MCF 10A (cell line): ENCODE measurements at regions of chr2 and their contacts with region 1.

Region 1: DNA sequence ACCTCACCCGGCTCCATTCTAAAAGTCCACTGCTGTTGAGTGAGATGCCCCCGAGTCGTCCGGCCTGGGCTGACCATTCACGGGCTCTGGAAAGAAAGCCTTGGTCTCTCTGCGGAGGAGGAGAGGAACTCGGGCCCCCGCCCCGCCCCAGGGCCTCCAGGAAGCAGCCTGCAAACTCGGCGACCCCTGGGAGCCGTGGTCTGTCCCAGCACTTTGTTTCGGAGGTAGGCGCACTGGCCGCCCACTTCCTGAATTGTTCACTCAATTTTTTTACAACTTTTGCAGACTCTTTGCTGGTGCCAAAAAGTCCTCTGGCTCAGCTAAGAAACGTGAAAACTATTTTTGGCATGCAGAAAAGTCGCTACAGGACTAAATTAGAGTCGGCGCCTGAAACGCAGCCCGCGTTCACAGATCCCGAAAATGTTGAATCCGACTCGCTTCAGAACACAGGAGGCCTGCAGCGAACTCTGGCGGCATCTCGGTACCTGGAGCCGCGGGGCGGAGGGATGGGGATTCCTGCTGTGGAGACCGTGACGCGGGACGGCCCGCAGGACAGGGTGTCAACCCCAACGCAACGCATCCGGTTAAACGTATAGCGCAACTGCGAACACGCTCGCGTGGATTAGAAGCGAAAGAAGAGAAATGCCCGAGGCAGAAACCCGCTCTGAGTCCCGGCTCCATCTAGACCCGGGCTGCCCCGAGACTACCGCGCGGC is 1.5 kb downstream of the PXDN start:
- DNase-seq: peak; percentile 91
- H3K4me3 Mint-ChIP-seq: peak overlapping the region; percentile 79
- H3K27ac Mint-ChIP-seq: peak overlapping the region; percentile 90
- H3K4me1 Mint-ChIP-seq: peaks cover 7% of the 10 kb centered on the region
- H3K27me3 Mint-ChIP-seq: no peaks in the 10 kb centered on the region
- CTCF ChIP-seq: peak; percentile 66

Region 2: GRCh38 chr2:1730015-1730927 is 12.6 kb before region 1 on chr2:
- CTCF ChIA-PET with region 1: interaction called, 38 read pairs
- POLR2A ChIA-PET with region 1: interaction called, 19 read pairs
- intact Hi-C with region 1: no loop called
- DNase-seq: peak; percentile 70
- H3K4me3 Mint-ChIP-seq: peak overlapping the region; percentile 53
- H3K27ac Mint-ChIP-seq: peak overlapping the region; percentile 99
- H3K4me1 Mint-ChIP-seq: peaks cover 32% of the 10 kb centered on the region
- H3K27me3 Mint-ChIP-seq: no peaks in the 10 kb centered on the region
- CTCF ChIP-seq: no peak

Region 3: GRCh38 chr2:1900736-1901135 is 157.9 kb after region 1 on chr2:
- CTCF ChIA-PET with region 1: no interaction called
- POLR2A ChIA-PET with region 1: no interaction called
- intact Hi-C with region 1: no loop called
- DNase-seq: no peak
- H3K4me3 Mint-ChIP-seq: no peak overlapping the region
- H3K27ac Mint-ChIP-seq: no peak overlapping the region
- H3K4me1 Mint-ChIP-seq: peaks cover 19% of the 10 kb centered on the region
- H3K27me3 Mint-ChIP-seq: peaks cover 12% of the 10 kb centered on the region
- CTCF ChIP-seq: no peak